Left colon (tissue), 2 donors: ENCODE measurements at regions of chr19 and their contacts with region 1.

Region 1: DNA sequence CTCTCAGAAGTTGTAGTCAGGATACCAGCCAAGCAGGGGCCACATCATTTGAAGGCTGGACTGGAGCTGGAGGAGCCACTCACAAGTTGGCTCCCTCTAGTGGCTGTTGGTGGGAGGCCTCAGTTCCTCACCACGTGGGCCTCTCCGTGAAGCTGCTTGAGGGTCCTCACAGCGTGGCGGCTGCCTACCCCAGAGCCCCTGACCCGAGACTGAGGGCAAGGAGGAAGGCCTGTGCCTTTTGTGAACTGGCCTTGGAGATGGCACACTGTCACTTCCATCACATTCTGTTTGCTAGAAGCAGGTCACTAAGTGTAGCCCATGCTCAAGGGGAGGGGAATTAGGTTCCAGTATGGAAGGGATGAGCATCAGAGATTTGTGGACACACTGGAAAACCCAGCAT is 14.6 kb downstream of the GNA11 start:
- DNase-seq: peak in 1 of 2 donors; percentile 80
- ATAC-seq: peak; percentile 20

Region 2: GRCh38 chr19:2962045-2962561 is 146.7 kb before region 1 on chr19:
- intact Hi-C with region 1: loop called in 1 of 2 experiments (anchors 10 kb)
- DNase-seq: no peak
- ATAC-seq: peak; percentile 92

Region 3: DNA sequence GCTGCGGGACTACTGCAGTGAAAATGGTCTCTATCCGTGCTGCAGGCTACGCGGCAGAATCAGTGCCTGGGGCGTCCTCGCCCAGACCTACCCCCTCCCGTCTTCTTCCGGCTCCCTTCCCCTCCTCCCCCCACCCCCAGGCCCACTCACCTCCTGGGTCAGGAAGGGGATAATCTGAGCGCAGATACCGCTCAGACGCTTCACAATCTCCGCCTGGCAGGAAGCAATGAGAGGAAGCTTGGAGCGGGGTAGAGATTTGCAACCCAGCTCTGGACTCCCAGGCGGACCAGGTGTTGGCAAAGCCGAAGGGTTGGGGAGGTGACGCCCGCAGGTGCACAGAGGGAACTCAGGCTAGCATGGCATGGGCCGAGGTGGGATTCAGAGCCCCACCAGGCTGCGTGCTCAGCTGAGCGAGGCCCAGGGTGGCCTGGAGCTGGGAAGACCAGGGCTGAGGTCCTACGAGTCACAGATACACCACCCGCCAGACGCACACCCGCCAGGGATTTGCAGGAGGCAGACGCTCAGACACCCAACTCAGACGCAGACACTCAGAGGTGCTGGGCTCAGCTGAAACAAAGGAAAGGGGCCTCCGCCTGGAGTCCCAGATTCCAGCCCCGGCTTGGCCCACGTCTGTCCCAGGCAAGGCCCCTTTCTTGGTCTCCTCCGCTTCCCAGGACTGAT is 83.8 kb before region 1 on chr19:
- intact Hi-C with region 1: no loop called
- DNase-seq: peak in 1 of 2 donors; percentile 31
- ATAC-seq: peak; percentile 36

Region 4: GRCh38 chr19:3336680-3337523 is 228.1 kb after region 1 on chr19:
- intact Hi-C with region 1: no loop called
- DNase-seq: peak; percentile 84 to 97
- ATAC-seq: peak; percentile 84